Activated T-helper 1 cell treated with anti-CD3 and anti-CD28 coated beads, Interleukin-12 subunit alpha, Interleukin-12 subunit beta, Interleukin-2, Interleukin-4 antibody, amounts not matched to agents 30 ng/mL and 10 ng/mL and 1 ng/mL, durations not matched to agents 14 hours and 24 hours and 36 hours (primary cell): ENCODE measurements at regions of chr1 and their contacts with region 1.

Region 1: GRCh38 chr1:145963995-145964901 is at the starts of genes ANKRD34A and POLR3GL:
- DNase-seq: peak; percentile 89
- H3K4me3 Mint-ChIP-seq: peak within 1 kb of the TSS; percentile 93
- H3K27ac Mint-ChIP-seq: peak within 1 kb of the TSS; percentile 87
- H3K4me1 Mint-ChIP-seq: peaks cover 48% of the 10 kb centered on the region
- H3K27me3 Mint-ChIP-seq: no peaks in the 10 kb centered on the region
- total RNA-seq, gene ANKRD34A: 4.8 and 5.1 TPM in 2 replicates
- total RNA-seq, gene POLR3GL: 10.6 and 11.6 TPM in 2 replicates

Region 2: GRCh38 chr1:145858894-145859490 is 105.3 kb before region 1 on chr1 and contains the start of gene PIAS3:
- intact Hi-C with region 1: loop called (anchors 1 kb)
- DNase-seq: peak; percentile 88
- H3K4me3 Mint-ChIP-seq: peak within 1 kb of the TSS; percentile 94
- H3K27ac Mint-ChIP-seq: peak within 1 kb of the TSS; percentile 93
- H3K4me1 Mint-ChIP-seq: peaks cover 20% of the 10 kb centered on the region
- H3K27me3 Mint-ChIP-seq: peaks cover 7% of the 10 kb centered on the region
- total RNA-seq, gene PIAS3: 16.9 and 17.0 TPM in 2 replicates

Region 3: GRCh38 chr1:145927063-145927886 is 37.0 kb before region 1 on chr1 and contains the start of gene RBM8A:
- intact Hi-C with region 1: loop called (anchors 1 kb)
- DNase-seq: peak; percentile 93
- H3K4me3 Mint-ChIP-seq: no peak within 1 kb of the TSS
- H3K27ac Mint-ChIP-seq: peak within 1 kb of the TSS; percentile 20
- H3K4me1 Mint-ChIP-seq: peaks cover 11% of the 10 kb centered on the region
- H3K27me3 Mint-ChIP-seq: no peaks in the 10 kb centered on the region
- total RNA-seq, gene RBM8A: 331 and 354 TPM in 2 replicates

Region 4: GRCh38 chr1:145996433-145997015 is 32.3 kb after region 1 on chr1 and contains the start of gene TXNIP:
- intact Hi-C with region 1: loop called (anchors 1 kb)
- DNase-seq: peak; percentile 92
- H3K4me3 Mint-ChIP-seq: peak within 1 kb of the TSS; percentile 94
- H3K27ac Mint-ChIP-seq: peak within 1 kb of the TSS; percentile 99
- H3K4me1 Mint-ChIP-seq: peaks cover 65% of the 10 kb centered on the region
- H3K27me3 Mint-ChIP-seq: no peaks in the 10 kb centered on the region
- total RNA-seq, gene TXNIP: 107 and 108 TPM in 2 replicates

Region 5: GRCh38 chr1:146036965-146037646 is 72.9 kb after region 1 on chr1:
- intact Hi-C with region 1: loop called (anchors 1 kb)
- DNase-seq: peak; percentile 70
- H3K4me3 Mint-ChIP-seq: peak overlapping the region; percentile 93
- H3K27ac Mint-ChIP-seq: peak overlapping the region; percentile 98
- H3K4me1 Mint-ChIP-seq: peaks cover 50% of the 10 kb centered on the region
- H3K27me3 Mint-ChIP-seq: peaks cover 24% of the 10 kb centered on the region